Naive thymus-derived CD4-positive, alpha-beta T cell (primary cell): ENCODE measurements at regions of chr7 and their contacts with region 1.

Region 1: DNA sequence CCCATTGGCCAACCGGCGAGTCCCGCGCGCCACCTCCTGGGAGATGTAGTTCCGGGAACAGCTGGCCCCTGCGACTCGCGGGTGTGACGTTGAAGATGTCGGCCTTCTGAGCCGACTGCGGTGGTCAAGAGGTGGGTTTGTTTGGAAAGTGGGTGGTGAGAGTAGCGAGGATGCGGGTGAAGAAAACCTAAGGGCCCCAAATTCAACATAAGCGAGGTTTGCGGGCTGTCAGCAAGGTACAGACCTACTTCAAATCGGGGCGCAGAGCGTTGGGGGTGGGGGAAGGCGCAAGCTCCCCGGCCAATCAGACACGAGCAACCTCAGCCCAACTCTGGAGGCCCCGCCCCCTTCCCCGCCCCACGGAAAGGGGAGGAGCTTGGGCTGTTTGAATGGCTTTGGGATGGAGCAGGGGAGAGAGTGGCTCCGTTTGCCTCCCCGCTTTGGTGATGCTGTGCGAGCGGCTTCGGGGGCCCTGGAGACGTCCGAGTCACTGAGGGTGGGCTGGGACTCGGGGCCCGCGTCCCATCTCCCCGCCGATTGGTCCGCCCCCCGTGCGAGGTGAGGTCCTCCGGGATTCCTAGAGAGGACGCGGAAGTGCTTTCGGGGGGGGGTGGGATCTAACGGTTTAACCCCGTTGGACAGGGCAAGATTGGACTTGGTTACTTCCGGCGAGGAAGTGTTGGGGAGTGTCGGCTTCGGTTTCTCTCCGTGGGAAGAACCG is at the start of gene ZKSCAN5:
- DNase-seq: peak; percentile 93 to 98 (median 97)
- ATAC-seq: peak; percentile 93
- H3K4me3 ChIP-seq: peak within 1 kb of the TSS; percentile 98
- H3K4me3 Mint-ChIP-seq: peak within 1 kb of the TSS; percentile 84 to 100 (median 96)
- H3K27ac ChIP-seq: peak within 1 kb of the TSS; percentile 88
- H3K27ac Mint-ChIP-seq: peak within 1 kb of the TSS; percentile 68 to 99 (median 97)
- H3K4me1 ChIP-seq: peaks cover 13 to 27% of the 10 kb centered on the region in 2 donors
- H3K4me1 Mint-ChIP-seq: peaks cover 20 to 41% (median 30%) of the 10 kb centered on the region in 7 donors
- H3K27me3 ChIP-seq: no peaks in the 10 kb centered on the region
- H3K27me3 Mint-ChIP-seq: no peaks in the 10 kb centered on the region
- total RNA-seq, gene ZKSCAN5: 4.7 to 11.0 (median 8.3) TPM

Region 2: DNA sequence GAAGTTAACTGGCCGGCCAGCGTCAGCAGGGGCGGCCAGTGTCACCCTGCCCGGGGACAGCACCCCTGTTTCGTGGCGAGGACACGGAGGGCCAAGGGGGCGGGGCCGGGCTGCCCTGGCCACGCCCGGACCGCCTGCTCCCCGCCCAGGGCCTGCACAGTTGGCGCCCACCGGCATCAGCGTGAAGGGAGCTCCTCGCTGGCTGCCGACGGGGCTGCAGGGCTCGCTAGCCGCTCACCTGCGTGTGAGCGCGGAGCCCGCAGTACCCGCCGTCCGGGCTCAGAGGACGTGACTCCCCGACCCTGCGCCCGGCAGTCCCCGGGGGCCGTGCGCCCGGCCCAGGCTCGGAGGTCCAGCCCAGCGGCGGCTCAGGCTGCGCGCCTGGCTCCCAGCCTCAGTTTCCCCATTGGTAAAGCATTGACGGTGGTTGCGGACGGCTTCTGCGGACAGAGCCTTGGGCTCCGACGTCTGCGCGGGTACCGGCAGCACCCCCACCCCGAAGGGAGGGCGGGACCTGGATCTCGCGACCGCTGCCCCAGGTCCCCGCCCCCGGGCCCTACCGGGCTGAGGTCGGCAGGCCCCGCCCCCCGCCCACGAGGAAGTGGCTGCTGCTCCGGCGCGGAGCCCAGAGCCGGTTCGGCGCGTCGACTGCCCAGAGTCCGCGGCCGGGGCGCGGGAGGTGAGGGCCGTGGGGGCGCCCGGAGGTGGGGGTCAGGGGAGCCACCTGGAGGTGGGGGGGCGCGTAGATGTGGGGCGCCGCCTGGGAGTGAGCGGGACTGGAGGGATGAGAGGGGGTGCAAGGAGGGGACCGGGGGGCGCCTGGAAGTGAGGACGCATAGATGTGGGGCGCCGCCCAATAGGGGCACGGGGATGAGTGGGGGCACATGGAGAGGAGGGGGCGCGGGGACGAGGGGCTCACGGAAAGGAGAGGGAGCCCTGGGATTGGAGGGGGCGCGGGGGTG is 130.4 kb before region 1 on chr7 and contains the start of gene ARPC1B:
- CTCF ChIA-PET with region 1: no interaction called
- POLR2A ChIA-PET with region 1: interaction called, 5 read pairs
- intact Hi-C with region 1: loop called in 1 of 2 experiments (anchors 2 kb)
- DNase-seq: peak; percentile 67 to 86 (median 76)
- ATAC-seq: peak; percentile 82
- H3K4me3 ChIP-seq: peak within 1 kb of the TSS; percentile 83
- H3K4me3 Mint-ChIP-seq: peak within 1 kb of the TSS; percentile 71 to 90 (median 82)
- H3K27ac ChIP-seq: peak within 1 kb of the TSS; percentile 95
- H3K27ac Mint-ChIP-seq: peak within 1 kb of the TSS; percentile 76 to 99 (median 94)
- H3K4me1 ChIP-seq: peaks cover 18 to 35% of the 10 kb centered on the region in 2 donors
- H3K4me1 Mint-ChIP-seq: peaks cover 6 to 36% (median 32%) of the 10 kb centered on the region in 7 donors
- H3K27me3 ChIP-seq: no peaks in the 10 kb centered on the region
- H3K27me3 Mint-ChIP-seq: no peaks in the 10 kb centered on the region
- total RNA-seq, gene ARPC1B: 88.1 to 364 (median 141) TPM

Region 3: GRCh38 chr7:99472561-99473243 is 32.1 kb before region 1 on chr7 and contains the start of gene ZNF789:
- CTCF ChIA-PET with region 1: no interaction called
- POLR2A ChIA-PET with region 1: interaction called, 18 read pairs
- intact Hi-C with region 1: loop called (anchors 1 kb)
- DNase-seq: peak; percentile 90 to 98 (median 95)
- ATAC-seq: peak; percentile 99
- H3K4me3 ChIP-seq: peak within 1 kb of the TSS; percentile 86
- H3K4me3 Mint-ChIP-seq: peak within 1 kb of the TSS; percentile 94 to 99 (median 98)
- H3K27ac ChIP-seq: peak within 1 kb of the TSS; percentile 82
- H3K27ac Mint-ChIP-seq: peak within 1 kb of the TSS; percentile 87 to 98 (median 95)
- H3K4me1 ChIP-seq: peaks cover 8 to 15% of the 10 kb centered on the region in 2 donors
- H3K4me1 Mint-ChIP-seq: peaks cover 23 to 48% (median 35%) of the 10 kb centered on the region in 7 donors
- H3K27me3 ChIP-seq: no peaks in the 10 kb centered on the region
- H3K27me3 Mint-ChIP-seq: peaks cover 0 to 5% (median 0%) of the 10 kb centered on the region in 5 donors
- total RNA-seq, gene ZNF789: 17.4 to 28.0 (median 27.3) TPM

Region 4: GRCh38 chr7:99616359-99617191 is 111.8 kb after region 1 on chr7 and contains the start of gene ZSCAN25:
- CTCF ChIA-PET with region 1: no interaction called
- POLR2A ChIA-PET with region 1: interaction called, 8 read pairs
- intact Hi-C with region 1: loop called (anchors 1 kb)
- DNase-seq: peak; percentile 65 to 88 (median 85)
- ATAC-seq: peak; percentile 99
- H3K4me3 ChIP-seq: peak within 1 kb of the TSS; percentile 83
- H3K4me3 Mint-ChIP-seq: peak within 1 kb of the TSS; percentile 94 to 99 (median 98)
- H3K27ac ChIP-seq: peak within 1 kb of the TSS; percentile 90
- H3K27ac Mint-ChIP-seq: peak within 1 kb of the TSS; percentile 88 to 99 (median 97)
- H3K4me1 ChIP-seq: peaks cover 12 to 14% of the 10 kb centered on the region in 2 donors
- H3K4me1 Mint-ChIP-seq: peaks cover 30 to 55% (median 48%) of the 10 kb centered on the region in 7 donors
- H3K27me3 ChIP-seq: no peaks in the 10 kb centered on the region
- H3K27me3 Mint-ChIP-seq: peaks cover 0 to 4% (median 0%) of the 10 kb centered on the region in 5 donors
- total RNA-seq, gene ZSCAN25: 33.9 to 51.6 (median 43.8) TPM

Region 5: GRCh38 chr7:99997545-99998137 is 492.9 kb after region 1 on chr7:
- CTCF ChIA-PET with region 1: no interaction called
- POLR2A ChIA-PET with region 1: no interaction called
- intact Hi-C with region 1: loop called in 1 of 2 experiments (anchors 10 kb)
- DNase-seq: peak; percentile 55 to 76 (median 72)
- ATAC-seq: peak; percentile 96
- H3K4me3 ChIP-seq: peak overlapping the region; percentile 43
- H3K4me3 Mint-ChIP-seq: peak overlapping the region; percentile 71 to 85 (median 76)
- H3K27ac ChIP-seq: peak overlapping the region; percentile 71
- H3K27ac Mint-ChIP-seq: peak overlapping the region; percentile 57 to 95 (median 87)
- H3K4me1 ChIP-seq: peaks cover 7 to 11% of the 10 kb centered on the region in 2 donors
- H3K4me1 Mint-ChIP-seq: peaks cover 7 to 21% (median 18%) of the 10 kb centered on the region in 7 donors
- H3K27me3 ChIP-seq: no peaks in the 10 kb centered on the region
- H3K27me3 Mint-ChIP-seq: peaks cover 0 to 3% (median 0%) of the 10 kb centered on the region in 5 donors

Region 6: DNA sequence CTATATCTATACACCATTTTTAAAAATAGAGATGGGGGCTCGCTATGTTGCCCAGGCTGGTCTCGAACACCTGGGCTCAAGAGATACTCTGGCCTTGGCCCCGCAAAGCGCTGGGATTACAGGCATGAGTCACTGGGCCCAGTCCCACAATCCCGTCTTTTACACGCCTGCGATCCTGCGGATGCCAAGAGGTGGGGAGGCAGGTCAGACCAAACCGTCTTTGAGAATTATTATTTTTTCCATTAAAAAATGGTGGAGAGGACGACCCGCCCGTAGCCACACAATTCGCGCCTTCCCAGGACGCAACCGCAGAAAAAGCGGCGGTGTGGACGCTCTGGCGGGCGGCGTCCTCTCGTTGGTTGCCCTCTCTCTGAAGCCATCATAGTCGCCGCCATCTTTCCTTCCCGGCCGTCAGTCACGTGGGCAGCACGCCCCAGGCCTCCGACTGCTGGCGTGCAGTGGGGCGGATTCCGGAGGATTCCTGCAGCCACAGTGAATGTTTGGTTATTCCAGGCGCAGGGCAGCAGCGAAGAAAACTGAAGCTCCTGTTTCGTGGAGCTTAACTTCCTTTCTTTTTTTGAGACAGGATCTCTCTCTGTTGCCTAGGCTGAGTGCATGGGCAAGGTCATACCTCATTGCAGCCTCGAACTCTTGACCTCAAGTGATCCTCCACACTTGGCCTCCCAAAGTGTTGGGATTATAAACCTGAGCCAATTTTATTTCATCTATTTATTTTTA is 1332.5 kb after region 1 on chr7:
- CTCF ChIA-PET with region 1: no interaction called
- POLR2A ChIA-PET with region 1: no interaction called
- intact Hi-C with region 1: loop called in 1 of 2 experiments (anchors 1 kb)
- DNase-seq: peak; percentile 42 to 65 (median 59)
- ATAC-seq: peak; percentile 97
- H3K4me3 ChIP-seq: peak overlapping the region; percentile 57
- H3K4me3 Mint-ChIP-seq: peak overlapping the region; percentile 80 to 90 (median 86)
- H3K27ac ChIP-seq: peak overlapping the region; percentile 59
- H3K27ac Mint-ChIP-seq: peak overlapping the region; percentile 64 to 92 (median 77)
- H3K4me1 ChIP-seq: no peaks in the 10 kb centered on the region
- H3K4me1 Mint-ChIP-seq: peaks cover 5 to 19% (median 16%) of the 10 kb centered on the region in 7 donors
- H3K27me3 ChIP-seq: no peaks in the 10 kb centered on the region
- H3K27me3 Mint-ChIP-seq: no peaks in the 10 kb centered on the region